A673 (cell line): ENCODE measurements at regions of chr2 and their contacts with region 1.

Region 1: GRCh38 chr2:1742681-1743395 is 1.5 kb downstream of the PXDN start:
- DNase-seq: peak; percentile 92
- H3K4me3 ChIP-seq: peak overlapping the region; percentile 95
- H3K27ac ChIP-seq: peak overlapping the region; percentile 87
- H3K4me1 ChIP-seq: peaks cover 30% of the 10 kb centered on the region
- H3K27me3 ChIP-seq: no peaks in the 10 kb centered on the region
- CTCF ChIP-seq: peak; percentile 76

Region 2: GRCh38 chr2:1707771-1708418 is 34.9 kb before region 1 on chr2:
- CTCF ChIA-PET with region 1: no interaction called
- POLR2A ChIA-PET with region 1: no interaction called
- intact Hi-C with region 1: loop called (anchors 5 kb)
- DNase-seq: peak; percentile 89
- H3K4me3 ChIP-seq: peak overlapping the region; percentile 17
- H3K27ac ChIP-seq: peak overlapping the region; percentile 70
- H3K4me1 ChIP-seq: peaks cover 40% of the 10 kb centered on the region
- H3K27me3 ChIP-seq: no peaks in the 10 kb centered on the region
- CTCF ChIP-seq: no peak

Region 3: DNA sequence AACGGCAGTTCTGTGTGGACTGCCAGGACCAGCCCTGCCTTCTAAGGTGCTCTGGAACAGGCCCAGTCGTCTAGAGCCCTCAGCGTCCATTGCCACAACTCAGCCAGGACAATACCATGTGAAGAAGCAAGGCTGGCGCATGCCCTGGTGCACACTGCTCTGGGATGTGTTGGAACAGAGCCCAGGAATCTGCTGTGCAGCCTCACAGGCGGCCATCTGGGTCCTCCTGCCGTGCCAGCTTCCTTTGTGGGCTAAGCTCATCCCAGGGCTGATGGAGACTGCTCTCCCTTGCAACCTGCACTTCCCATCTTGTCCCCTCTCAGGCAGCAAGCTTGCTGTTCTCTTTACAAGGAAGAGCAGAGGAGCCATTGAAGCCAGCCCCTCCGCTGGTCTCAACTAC is 247.9 kb after region 1 on chr2:
- CTCF ChIA-PET with region 1: no interaction called
- POLR2A ChIA-PET with region 1: no interaction called
- intact Hi-C with region 1: no loop called
- DNase-seq: peak; percentile 86
- H3K4me3 ChIP-seq: no peak overlapping the region
- H3K27ac ChIP-seq: no peak overlapping the region
- H3K4me1 ChIP-seq: peaks cover 11% of the 10 kb centered on the region
- H3K27me3 ChIP-seq: no peaks in the 10 kb centered on the region
- CTCF ChIP-seq: no peak